HEK293T (cell line): ENCODE measurements at regions of chr5 and their contacts with region 1.

Region 1: DNA sequence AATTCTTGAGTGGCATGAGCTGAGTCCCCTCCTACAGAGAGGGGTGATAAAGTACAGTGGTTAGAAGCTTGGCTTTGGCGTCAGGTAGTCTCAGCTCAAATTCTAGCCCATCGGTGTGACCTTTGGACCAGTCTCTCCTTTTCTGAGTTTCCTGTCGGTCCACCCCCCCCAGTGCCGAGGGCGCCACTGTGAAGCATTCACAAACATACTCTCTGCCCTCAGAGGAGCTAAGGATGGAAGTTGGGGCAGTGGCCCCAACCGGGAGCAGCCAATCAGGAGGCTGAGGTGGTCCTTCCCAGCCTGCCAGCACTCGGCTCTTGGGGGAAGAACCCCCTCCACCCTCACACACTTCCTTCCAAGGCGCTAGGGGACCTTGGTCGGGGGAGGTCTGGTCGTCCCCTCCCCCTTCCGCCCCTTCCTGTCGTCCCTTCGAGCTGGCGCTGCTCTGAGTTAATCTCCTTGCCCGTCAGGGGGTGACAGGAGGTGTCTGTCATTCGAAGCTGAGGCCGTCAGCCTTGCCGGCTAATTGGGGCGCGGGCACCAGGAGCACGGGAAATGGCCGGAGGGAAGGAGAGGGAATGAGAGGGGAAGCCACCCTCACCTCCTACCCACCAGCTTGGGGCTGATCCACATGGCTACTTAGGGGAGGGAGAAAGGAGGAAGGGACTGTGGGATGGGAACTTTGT is 53.0 kb downstream of the CXXC5 start:
- DNase-seq: no peak

Region 2: GRCh38 chr5:139711067-139711905 is 10.1 kb after region 1 on chr5:
- CTCF ChIA-PET with region 1: interaction called, 12 read pairs
- POLR2A ChIA-PET with region 1: interaction called, 7 read pairs
- DNase-seq: peak; percentile 67

Region 3: DNA sequence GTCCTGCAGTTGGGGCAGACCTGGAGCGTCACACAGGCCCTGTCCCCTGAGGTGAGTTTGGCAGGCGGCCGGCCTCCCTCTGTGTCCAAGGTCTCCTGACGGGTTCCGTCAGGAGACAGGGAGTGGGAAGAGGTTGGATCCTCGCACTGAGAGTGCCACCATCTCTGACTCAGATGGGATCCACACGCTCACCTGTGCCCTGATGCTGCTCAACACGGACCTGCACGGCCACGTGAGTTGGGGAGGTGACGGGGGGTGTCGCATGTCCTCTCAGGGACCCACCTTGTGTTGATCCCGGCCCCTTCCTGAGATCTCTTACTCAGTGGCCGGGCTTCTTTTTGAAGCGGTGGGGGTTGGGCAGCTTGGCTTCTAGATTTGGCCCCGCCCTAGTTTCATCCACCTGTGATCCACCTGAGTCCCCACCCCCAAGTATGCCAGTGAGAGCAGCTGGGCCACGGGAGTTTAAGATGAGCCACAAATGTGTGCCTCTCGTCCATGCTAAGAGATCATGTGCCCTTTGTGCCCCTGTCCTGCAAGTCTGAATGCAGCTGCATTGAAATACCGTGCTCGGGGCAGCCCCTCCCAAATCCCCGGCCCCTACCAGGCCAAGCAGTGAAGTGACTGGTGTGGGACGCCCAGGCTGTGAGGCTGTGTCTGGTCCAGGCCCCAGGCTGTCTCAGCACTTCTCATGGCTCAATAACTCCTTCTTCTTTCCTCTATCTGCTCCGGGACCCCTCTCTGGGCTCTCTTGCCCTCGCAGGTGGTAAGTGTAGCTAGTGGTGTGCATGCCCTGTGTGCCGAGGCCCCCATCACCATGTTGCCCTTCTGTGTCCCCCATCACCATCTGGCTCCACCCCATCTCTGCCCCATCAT is 121.6 kb after region 1 on chr5:
- CTCF ChIA-PET with region 1: no interaction called
- POLR2A ChIA-PET with region 1: no interaction called
- DNase-seq: no peak